ENCODE measurements at regions of chr15 and their contacts with region 1.

Region 1: GRCh38 chr15:90869601-90870353 is 1.4 kb downstream of the FURIN start:
- DNase-seq: peak in 1 of 10 donors; percentile 55
- H3K4me3 ChIP-seq: peak overlapping the region in 35 of 59 donors; percentile 6 to 94 (median 83)
- H3K27ac ChIP-seq: peak overlapping the region in 56 of 59 donors; percentile 28 to 99 (median 94)
- H3K27me3 ChIP-seq: no peaks in the 10 kb centered on the region
- CTCF ChIP-seq: no peak

Region 2: GRCh38 chr15:90716976-90717821 is 152.6 kb before region 1 on chr15 and contains the start of gene BLM:
- intact Hi-C with region 1: loop called in 1 of 2 experiments (anchors 5 kb)
- DNase-seq: peak; percentile 90 to 97 (median 97)
- H3K4me3 ChIP-seq: peak within 1 kb of the TSS; percentile 50 to 95 (median 81)
- H3K27ac ChIP-seq: peak within 1 kb of the TSS; percentile 40 to 96 (median 91)
- H3K27me3 ChIP-seq: no peaks in the 10 kb centered on the region
- CTCF ChIP-seq: peak in 51 of 56 donors; percentile 19 to 69 (median 53)
- total RNA-seq, gene BLM: 1.9 to 12.9 (median 5.7) TPM

Region 3: GRCh38 chr15:90819850-90820797 is 49.7 kb before region 1 on chr15:
- intact Hi-C with region 1: loop called in 1 of 2 experiments (anchors 5 kb)
- DNase-seq: no peak
- H3K4me3 ChIP-seq: no peak overlapping the region
- H3K27ac ChIP-seq: peak overlapping the region in 8 of 59 donors; percentile 6 to 88 (median 54)
- H3K27me3 ChIP-seq: no peaks in the 10 kb centered on the region
- CTCF ChIP-seq: no peak

Region 4: GRCh38 chr15:90902040-90902839 is 32.5 kb after region 1 on chr15:
- intact Hi-C with region 1: loop called in 1 of 2 experiments (anchors 2 kb)
- DNase-seq: peak; percentile 63 to 85 (median 75)
- H3K4me3 ChIP-seq: peak overlapping the region; percentile 54 to 94 (median 82)
- H3K27ac ChIP-seq: peak overlapping the region; percentile 87 to 100 (median 98)
- H3K27me3 ChIP-seq: no peaks in the 10 kb centered on the region
- CTCF ChIP-seq: peak; percentile 50 to 90 (median 78)

Region 5: DNA sequence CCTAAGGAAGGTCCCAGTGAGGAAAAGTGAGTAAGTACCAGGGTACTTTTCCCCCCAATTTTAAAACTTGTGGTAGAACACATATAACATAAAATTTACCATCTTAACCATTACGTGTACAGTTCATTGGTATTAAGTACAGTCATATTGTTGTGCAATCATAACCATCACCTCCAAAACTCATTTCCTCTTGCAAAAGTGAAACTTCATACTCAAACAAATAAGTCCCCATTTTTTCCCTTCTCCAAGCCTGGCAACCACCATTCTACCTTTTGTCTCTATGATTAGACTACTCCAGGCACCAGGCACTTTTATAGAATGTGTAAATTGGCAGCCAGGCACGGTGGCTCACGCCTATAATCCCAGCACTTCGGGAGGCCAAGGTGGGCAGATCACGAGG is 112.4 kb after region 1 on chr15:
- intact Hi-C with region 1: no loop called
- DNase-seq: no peak
- H3K4me3 ChIP-seq: no peak overlapping the region
- H3K27ac ChIP-seq: no peak overlapping the region
- H3K27me3 ChIP-seq: no peaks in the 10 kb centered on the region
- CTCF ChIP-seq: no peak

Region 6: GRCh38 chr15:91018158-91018557 is 148.4 kb after region 1 on chr15:
- intact Hi-C with region 1: no loop called
- DNase-seq: no peak
- H3K4me3 ChIP-seq: no peak overlapping the region
- H3K27ac ChIP-seq: no peak overlapping the region
- H3K27me3 ChIP-seq: no peaks in the 10 kb centered on the region
- CTCF ChIP-seq: no peak